Dendritic cell treated with granulocyte-macrophage colony-stimulating factor and Interleukin-4, amounts not matched to agents 40 ng/mL and 50 ng/mL, for 4 days (primary cell): ENCODE measurements at regions of chr13 and their contacts with region 1.

Region 1: DNA sequence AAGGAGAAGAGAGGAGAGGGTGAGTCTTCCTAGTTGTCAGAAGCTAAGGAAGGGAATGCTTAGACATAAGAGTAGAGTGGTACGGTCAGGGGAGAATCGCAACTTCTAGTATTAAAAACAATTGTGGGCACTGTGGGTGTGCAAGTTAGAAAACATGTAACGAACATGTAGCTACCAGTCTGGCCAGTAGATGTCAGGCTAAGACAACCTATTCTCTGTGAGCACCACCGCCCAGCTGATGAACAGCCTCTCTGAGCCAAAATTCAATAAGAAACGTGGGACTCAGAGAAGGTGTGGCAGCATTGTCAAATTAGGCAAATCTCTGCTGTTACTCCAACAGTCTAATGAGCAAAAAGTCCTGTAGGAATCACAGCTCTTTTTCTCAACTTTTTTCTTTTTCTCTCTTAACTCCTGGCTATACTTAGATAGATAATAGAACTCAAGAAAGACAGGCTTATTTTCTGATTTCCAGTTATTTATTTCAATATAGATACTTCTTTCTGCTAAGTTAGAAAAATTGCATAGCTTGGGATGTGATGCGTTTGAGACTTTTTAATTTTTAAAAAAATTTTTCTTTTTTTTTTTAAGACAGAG is 186.2 kb downstream of the USP12 start:
- H3K4me3 Mint-ChIP-seq: no peak overlapping the region
- H3K27ac Mint-ChIP-seq: no peak overlapping the region
- H3K4me1 Mint-ChIP-seq: peaks cover 16% of the 10 kb centered on the region
- H3K27me3 Mint-ChIP-seq: no peaks in the 10 kb centered on the region

Region 2: GRCh38 chr13:27203854-27204253 is 218.5 kb after region 1 on chr13:
- intact Hi-C with region 1: loop called (anchors 2 kb)
- H3K4me3 Mint-ChIP-seq: no peak overlapping the region
- H3K27ac Mint-ChIP-seq: no peak overlapping the region
- H3K4me1 Mint-ChIP-seq: no peaks in the 10 kb centered on the region
- H3K27me3 Mint-ChIP-seq: no peaks in the 10 kb centered on the region

Region 3: GRCh38 chr13:27283906-27284493 is 298.6 kb after region 1 on chr13:
- intact Hi-C with region 1: loop called (anchors 1 kb)
- H3K4me3 Mint-ChIP-seq: no peak overlapping the region
- H3K27ac Mint-ChIP-seq: no peak overlapping the region
- H3K4me1 Mint-ChIP-seq: peaks cover 9% of the 10 kb centered on the region
- H3K27me3 Mint-ChIP-seq: no peaks in the 10 kb centered on the region

Region 4: GRCh38 chr13:27362064-27362883 is 376.9 kb after region 1 on chr13:
- intact Hi-C with region 1: loop called (anchors 1 kb)
- H3K4me3 Mint-ChIP-seq: peak overlapping the region; percentile 45
- H3K27ac Mint-ChIP-seq: no peak overlapping the region
- H3K4me1 Mint-ChIP-seq: no peaks in the 10 kb centered on the region
- H3K27me3 Mint-ChIP-seq: peaks cover 27% of the 10 kb centered on the region